PC-9 (cell line): ENCODE measurements at regions of chr1 and their contacts with region 1.

Region 1: GRCh38 chr1:38500352-38500751 is 359.2 kb downstream of the RRAGC start:
- DNase-seq: no peak
- H3K4me3 ChIP-seq: no peak overlapping the region
- H3K27ac ChIP-seq: no peak overlapping the region
- H3K4me1 ChIP-seq: no peaks in the 10 kb centered on the region
- H3K27me3 ChIP-seq: peaks cover 67% of the 10 kb centered on the region
- CTCF ChIP-seq: peak; percentile 42; the same call in 1 of the 2 replicates

Region 2: GRCh38 chr1:36576118-36576517 is 1924.2 kb before region 1 on chr1:
- CTCF ChIA-PET with region 1: interaction called, 22 read pairs
- POLR2A ChIA-PET with region 1: no interaction called
- intact Hi-C with region 1: no loop called
- DNase-seq: peak; percentile 48 to 64
- H3K4me3 ChIP-seq: no peak overlapping the region
- H3K27ac ChIP-seq: no peak overlapping the region
- H3K4me1 ChIP-seq: no peaks in the 10 kb centered on the region
- H3K27me3 ChIP-seq: peaks cover 30% of the 10 kb centered on the region
- CTCF ChIP-seq: peak; percentile 87

Region 3: GRCh38 chr1:37265786-37266667 is 1234.3 kb before region 1 on chr1:
- CTCF ChIA-PET with region 1: no interaction called
- POLR2A ChIA-PET with region 1: interaction called, 25 read pairs
- intact Hi-C with region 1: no loop called
- DNase-seq: no peak
- H3K4me3 ChIP-seq: no peak overlapping the region
- H3K27ac ChIP-seq: no peak overlapping the region
- H3K4me1 ChIP-seq: no peaks in the 10 kb centered on the region
- H3K27me3 ChIP-seq: peaks cover 28% of the 10 kb centered on the region
- CTCF ChIP-seq: no peak

Region 4: GRCh38 chr1:38571726-38572125 is 71.4 kb after region 1 on chr1:
- CTCF ChIA-PET with region 1: no interaction called
- POLR2A ChIA-PET with region 1: no interaction called
- intact Hi-C with region 1: no loop called
- DNase-seq: no peak
- H3K4me3 ChIP-seq: no peak overlapping the region
- H3K27ac ChIP-seq: no peak overlapping the region
- H3K4me1 ChIP-seq: no peaks in the 10 kb centered on the region
- H3K27me3 ChIP-seq: peaks cover 77% of the 10 kb centered on the region
- CTCF ChIP-seq: no peak

Region 5: GRCh38 chr1:38584448-38585355 is 84.3 kb after region 1 on chr1:
- CTCF ChIA-PET with region 1: no interaction called
- POLR2A ChIA-PET with region 1: no interaction called
- intact Hi-C with region 1: no loop called
- DNase-seq: no peak
- H3K4me3 ChIP-seq: no peak overlapping the region
- H3K27ac ChIP-seq: no peak overlapping the region
- H3K4me1 ChIP-seq: no peaks in the 10 kb centered on the region
- H3K27me3 ChIP-seq: peaks cover 48% of the 10 kb centered on the region
- CTCF ChIP-seq: no peak